Activated T-helper 2 cell treated with anti-CD3 and anti-CD28 coated beads, Interferon-gamma antibody, Interleukin-2, Interleukin-4, amounts not matched to agents 10 μg/mL and 5 μg/mL and 100 μg/mL, durations not matched to agents 14 hours and 24 hours and 36 hours (primary cell): ENCODE measurements at regions of chr19 and their contacts with region 1.

Region 1: GRCh38 chr19:46860125-46860845 is 512 bp upstream of the ARHGAP35 start:
- DNase-seq: peak; percentile 98
- H3K4me3 Mint-ChIP-seq: peak overlapping the region; percentile 80
- H3K27ac Mint-ChIP-seq: peak overlapping the region; percentile 85
- H3K4me1 Mint-ChIP-seq: peaks cover 23% of the 10 kb centered on the region
- H3K27me3 Mint-ChIP-seq: no peaks in the 10 kb centered on the region

Region 2: GRCh38 chr19:46746281-46747013 is 113.8 kb before region 1 on chr19 and contains the start of gene STRN4:
- intact Hi-C with region 1: no loop called
- DNase-seq: peak; percentile 38
- H3K4me3 Mint-ChIP-seq: peak within 1 kb of the TSS; percentile 95
- H3K27ac Mint-ChIP-seq: peak within 1 kb of the TSS; percentile 83
- H3K4me1 Mint-ChIP-seq: peaks cover 32% of the 10 kb centered on the region
- H3K27me3 Mint-ChIP-seq: no peaks in the 10 kb centered on the region
- total RNA-seq, gene STRN4: 96.2 and 97.7 TPM in 2 replicates

Region 3: DNA sequence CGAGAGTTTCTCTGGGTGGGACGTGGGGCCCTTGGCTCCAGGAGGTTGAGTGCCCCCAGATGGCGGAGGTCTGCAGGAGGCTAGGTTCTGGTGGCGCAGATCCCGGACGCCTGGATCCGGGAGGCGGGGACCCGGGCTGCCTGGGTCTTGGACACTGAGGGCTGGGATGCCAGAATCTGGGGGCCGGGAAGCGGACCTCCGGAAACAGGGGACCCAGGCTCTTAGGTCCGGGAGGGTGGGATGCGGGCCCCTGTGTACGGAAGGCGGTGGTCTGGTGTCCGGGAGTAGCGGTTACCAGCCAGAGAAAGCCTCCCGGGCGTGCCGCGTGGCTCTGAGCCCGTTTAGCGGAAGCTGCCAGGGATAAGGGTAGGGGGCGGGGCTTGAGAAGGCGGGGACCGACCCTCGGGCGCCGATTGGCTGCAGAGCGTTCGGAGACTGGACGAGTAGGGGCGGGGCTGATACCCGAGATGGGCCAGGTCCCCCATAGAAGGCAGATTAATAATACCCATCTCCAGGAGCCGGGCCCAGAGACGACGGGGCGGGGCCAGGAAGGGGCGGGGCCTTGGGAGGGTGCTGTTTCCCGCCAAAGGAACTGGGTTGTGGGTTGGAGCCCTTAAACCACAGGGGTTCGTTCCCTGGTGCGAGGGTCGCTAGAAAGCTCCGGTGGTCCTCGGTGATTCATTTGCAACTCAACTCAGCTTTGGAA is 71.9 kb before region 1 on chr19 and contains the start of gene SLC1A5:
- intact Hi-C with region 1: no loop called
- DNase-seq: peak; percentile 97
- H3K4me3 Mint-ChIP-seq: peak within 1 kb of the TSS; percentile 95
- H3K27ac Mint-ChIP-seq: peak within 1 kb of the TSS; percentile 93
- H3K4me1 Mint-ChIP-seq: peaks cover 44% of the 10 kb centered on the region
- H3K27me3 Mint-ChIP-seq: no peaks in the 10 kb centered on the region
- total RNA-seq, gene SLC1A5: 203 and 208 TPM in 2 replicates

Region 4: DNA sequence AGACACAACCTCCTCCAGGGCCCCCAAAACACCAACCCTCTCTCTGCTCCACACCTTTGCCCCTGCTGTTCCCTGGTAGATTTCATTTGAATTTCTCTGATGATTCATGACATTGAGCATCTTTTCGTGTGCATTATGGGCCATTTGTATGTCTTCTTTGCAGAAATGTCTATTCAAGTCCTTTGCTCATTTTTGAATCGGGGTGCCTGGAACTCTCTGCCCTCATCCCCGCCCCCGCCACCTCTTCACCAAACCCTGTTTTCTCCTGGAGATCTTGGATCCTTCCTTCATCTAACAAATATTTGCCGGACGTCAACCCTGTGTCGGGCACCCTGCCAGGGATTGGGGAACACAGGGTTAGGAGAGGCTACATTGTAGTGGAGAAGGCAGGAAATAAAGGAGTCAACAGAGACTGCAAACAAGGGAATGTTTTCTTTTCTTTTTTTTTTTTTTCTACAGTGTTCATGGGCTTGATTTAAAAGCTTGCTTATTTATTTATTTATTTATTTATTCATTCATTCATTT is 46.4 kb before region 1 on chr19:
- intact Hi-C with region 1: no loop called
- DNase-seq: no peak
- H3K4me3 Mint-ChIP-seq: no peak overlapping the region
- H3K27ac Mint-ChIP-seq: no peak overlapping the region
- H3K4me1 Mint-ChIP-seq: peaks cover under 1% of the 10 kb centered on the region
- H3K27me3 Mint-ChIP-seq: no peaks in the 10 kb centered on the region

Region 5: DNA sequence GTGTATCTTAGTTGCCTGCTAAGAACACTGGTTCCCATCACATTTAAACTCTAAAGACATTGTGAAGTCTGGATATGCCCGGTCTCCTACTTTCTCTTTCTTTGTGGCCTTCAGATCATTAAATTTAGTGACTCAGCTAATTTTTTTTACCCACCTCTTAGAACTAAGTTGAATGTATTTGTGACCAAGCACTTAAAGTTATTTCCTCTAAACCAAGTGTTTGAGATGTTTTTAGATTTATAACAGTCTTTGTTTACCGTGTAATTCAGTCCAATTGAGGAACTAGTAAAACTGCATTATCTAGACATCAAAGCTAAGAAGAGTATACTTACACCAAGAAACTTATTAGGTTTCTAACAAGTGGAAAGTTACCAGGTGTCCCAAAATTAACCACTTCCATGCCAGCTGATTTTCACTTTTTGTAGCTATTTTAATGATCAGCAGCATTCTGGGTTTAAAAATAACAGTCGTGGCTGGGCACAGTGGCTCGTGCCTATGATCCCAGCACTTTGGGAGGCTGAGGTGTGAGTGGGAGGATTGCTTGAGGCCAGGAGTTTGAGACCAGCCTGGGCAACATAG is 53.7 kb after region 1 on chr19:
- intact Hi-C with region 1: loop called (anchors 10 kb)
- DNase-seq: no peak
- H3K4me3 Mint-ChIP-seq: no peak overlapping the region
- H3K27ac Mint-ChIP-seq: no peak overlapping the region
- H3K4me1 Mint-ChIP-seq: peaks cover 37% of the 10 kb centered on the region
- H3K27me3 Mint-ChIP-seq: no peaks in the 10 kb centered on the region

Region 6: DNA sequence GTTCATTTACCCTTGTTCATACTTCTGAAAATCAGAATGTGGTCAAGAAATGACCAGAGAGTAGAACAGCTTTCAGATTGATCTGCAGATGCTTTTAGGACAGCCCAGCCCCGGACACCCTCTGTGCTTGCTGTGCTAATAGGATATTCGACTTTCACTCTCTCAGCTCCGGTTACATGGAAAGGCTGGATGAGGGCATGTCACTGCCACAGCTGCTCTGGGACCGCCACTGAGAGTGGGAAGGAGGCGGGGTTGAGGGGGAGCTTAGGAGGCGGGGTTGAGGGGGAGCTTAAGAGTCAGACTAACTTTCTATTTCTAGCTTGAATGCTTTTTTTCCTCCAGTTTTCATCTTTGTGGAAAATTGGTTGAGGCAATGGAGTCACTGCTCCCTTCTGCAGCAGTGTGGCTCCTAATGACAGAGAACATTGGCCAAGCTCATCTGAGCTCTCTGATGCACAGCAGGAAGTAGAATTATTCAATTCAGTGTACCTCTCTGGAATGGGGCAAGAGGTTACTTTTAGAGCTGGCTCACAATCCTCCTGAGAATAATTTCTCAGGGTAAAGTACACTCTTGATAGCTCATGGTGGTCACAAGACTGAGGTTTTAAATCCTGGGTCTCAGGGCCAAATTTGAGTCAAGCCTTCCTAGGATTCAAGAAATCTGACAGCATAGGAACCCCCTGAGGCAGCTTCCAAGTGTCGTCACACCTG is 84.8 kb after region 1 on chr19:
- intact Hi-C with region 1: no loop called
- DNase-seq: no peak
- H3K4me3 Mint-ChIP-seq: no peak overlapping the region
- H3K27ac Mint-ChIP-seq: no peak overlapping the region
- H3K4me1 Mint-ChIP-seq: peaks cover 13% of the 10 kb centered on the region
- H3K27me3 Mint-ChIP-seq: no peaks in the 10 kb centered on the region

Region 7: GRCh38 chr19:46990991-46991676 is 130.8 kb after region 1 on chr19:
- intact Hi-C with region 1: loop called (anchors 1 kb)
- DNase-seq: peak; percentile 44
- H3K4me3 Mint-ChIP-seq: no peak overlapping the region
- H3K27ac Mint-ChIP-seq: peak overlapping the region; percentile 33
- H3K4me1 Mint-ChIP-seq: peaks cover 10% of the 10 kb centered on the region
- H3K27me3 Mint-ChIP-seq: no peaks in the 10 kb centered on the region

Region 8: DNA sequence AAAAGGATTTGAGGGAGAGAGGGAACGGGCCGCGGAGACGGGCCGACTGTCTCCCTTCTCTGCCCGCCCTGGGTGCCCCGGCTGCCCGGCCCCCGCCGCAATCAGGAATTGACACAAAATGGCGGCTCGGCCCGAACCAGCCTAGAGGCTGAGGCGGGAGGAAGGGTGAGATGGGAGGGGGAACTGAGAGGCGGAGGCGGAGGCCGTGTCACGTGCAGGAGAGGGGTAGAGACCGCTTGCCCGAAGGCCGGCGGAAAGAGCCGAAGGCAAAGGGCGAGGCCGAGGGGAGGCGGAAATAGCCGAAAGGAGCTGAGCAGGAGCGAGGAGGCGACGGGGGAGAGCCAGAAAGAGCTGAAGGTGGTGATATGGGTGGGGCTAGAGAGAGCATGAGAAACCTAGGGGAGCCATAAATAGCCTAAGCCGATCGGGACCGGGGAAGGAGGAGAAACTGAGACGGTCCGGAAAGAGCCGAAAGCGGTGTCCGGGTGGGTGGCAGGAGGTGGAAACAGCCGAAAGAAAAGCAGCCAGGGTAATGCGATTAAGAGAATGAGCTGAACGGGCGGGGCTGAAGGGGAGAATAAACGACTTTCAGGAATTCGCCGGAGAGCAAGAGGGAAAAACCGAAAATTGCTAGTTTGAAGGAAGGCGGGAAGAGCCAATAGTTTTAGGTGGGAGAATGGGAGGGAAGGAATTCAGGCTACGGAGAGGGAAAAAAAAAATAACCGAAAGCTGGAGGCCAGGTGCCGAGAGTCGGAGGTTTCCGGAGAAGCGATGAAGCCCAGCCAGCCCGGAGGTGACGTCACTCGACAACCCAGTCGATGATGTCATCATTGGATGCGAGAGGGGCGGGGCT is 252.9 kb after region 1 on chr19 and contains the start of gene ZC3H4:
- intact Hi-C with region 1: loop called (anchors 1 kb)
- DNase-seq: peak; percentile 100
- H3K4me3 Mint-ChIP-seq: peak within 1 kb of the TSS; percentile 95
- H3K27ac Mint-ChIP-seq: peak within 1 kb of the TSS; percentile 99
- H3K4me1 Mint-ChIP-seq: peaks cover 26% of the 10 kb centered on the region
- H3K27me3 Mint-ChIP-seq: no peaks in the 10 kb centered on the region
- total RNA-seq, gene ZC3H4: 97.1 and 104 TPM in 2 replicates